Activated CD8-positive, alpha-beta memory T cell treated with anti-CD3 and anti-CD28 coated beads, Interleukin-2, amount 10 ng/mL, durations not matched to agents 7 days and 5 days (primary cell): ENCODE measurements at regions of chr1 and their contacts with region 1.

Region 1: GRCh38 chr1:156583821-156584622 is 4.5 kb downstream of the TTC24 start:
- DNase-seq: peak; percentile 86
- ATAC-seq: peak; percentile 35
- H3K4me3 Mint-ChIP-seq: peak overlapping the region; percentile 82
- H3K27ac Mint-ChIP-seq: no peak overlapping the region
- H3K4me1 Mint-ChIP-seq: peaks cover 22% of the 10 kb centered on the region
- H3K27me3 Mint-ChIP-seq: no peaks in the 10 kb centered on the region

Region 2: DNA sequence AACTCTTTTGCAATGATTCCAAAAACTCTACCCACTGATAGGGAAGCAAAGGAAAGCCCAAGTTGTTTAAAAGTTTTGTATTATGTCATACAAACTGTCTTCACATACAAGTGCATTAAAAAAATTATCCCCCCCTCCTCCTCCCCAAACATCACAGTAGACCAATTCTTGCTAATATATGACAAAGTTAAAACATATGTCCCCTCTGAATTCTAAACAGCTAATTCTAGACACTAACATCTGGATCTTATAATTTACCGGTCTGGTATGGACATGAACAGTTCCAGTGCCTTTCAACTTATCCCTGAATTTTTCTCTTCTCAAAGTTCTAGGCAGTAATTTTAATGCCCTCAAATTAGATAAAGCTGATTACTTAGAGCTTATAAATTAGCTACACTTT is 686.3 kb before region 1 on chr1:
- CTCF ChIA-PET with region 1: no interaction called
- DNase-seq: no peak
- ATAC-seq: no peak
- H3K4me3 Mint-ChIP-seq: no peak overlapping the region
- H3K27ac Mint-ChIP-seq: no peak overlapping the region
- H3K4me1 Mint-ChIP-seq: peaks cover 16% of the 10 kb centered on the region
- H3K27me3 Mint-ChIP-seq: no peaks in the 10 kb centered on the region

Region 3: GRCh38 chr1:156601122-156601830 is 17.3 kb after region 1 on chr1 and contains the start of gene GPATCH4:
- CTCF ChIA-PET with region 1: interaction called, 23 read pairs
- DNase-seq: peak; percentile 94
- ATAC-seq: peak; percentile 85
- H3K4me3 Mint-ChIP-seq: peak within 1 kb of the TSS; percentile 99
- H3K27ac Mint-ChIP-seq: peak within 1 kb of the TSS; percentile 98
- H3K4me1 Mint-ChIP-seq: peaks cover 37% of the 10 kb centered on the region
- H3K27me3 Mint-ChIP-seq: no peaks in the 10 kb centered on the region
- total RNA-seq, gene GPATCH4: 40.5 to 50.9 TPM

Region 4: GRCh38 chr1:156652131-156652991 is 68.3 kb after region 1 on chr1:
- CTCF ChIA-PET with region 1: no interaction called
- DNase-seq: no peak
- ATAC-seq: no peak
- H3K4me3 Mint-ChIP-seq: no peak overlapping the region
- H3K27ac Mint-ChIP-seq: no peak overlapping the region
- H3K4me1 Mint-ChIP-seq: peaks cover 7% of the 10 kb centered on the region
- H3K27me3 Mint-ChIP-seq: peaks cover 89% of the 10 kb centered on the region

Region 5: GRCh38 chr1:156704930-156705320 is 120.9 kb after region 1 on chr1:
- CTCF ChIA-PET with region 1: no interaction called
- DNase-seq: no peak
- ATAC-seq: no peak
- H3K4me3 Mint-ChIP-seq: no peak overlapping the region
- H3K27ac Mint-ChIP-seq: no peak overlapping the region
- H3K4me1 Mint-ChIP-seq: peaks cover 22% of the 10 kb centered on the region
- H3K27me3 Mint-ChIP-seq: peaks cover 43% of the 10 kb centered on the region